K562 (cell line): ENCODE measurements at regions of chr7 and their contacts with region 1.

Region 1: GRCh38 chr7:24778543-24779282 is 21.4 kb upstream of the GSDME start:
- DNase-seq: peak in 1 of 4 experiments; percentile 49
- ATAC-seq: peak; percentile 92
- H3K4me3 ChIP-seq: no peak overlapping the region
- H3K27ac ChIP-seq: peak overlapping the region; percentile 71; the same call in 2 of the 3 replicates
- H3K4me1 ChIP-seq: peaks cover 3 to 16% of the 10 kb centered on the region in 2 experiments; a peak in 3 of 5 replicates
- H3K27me3 ChIP-seq: no peaks in the 10 kb centered on the region
- CTCF ChIP-seq: no peak
- EP300 ChIP-seq: peak; percentile 92
- POLR2A ChIP-seq: no peak
- RAD21 ChIP-seq: peak; percentile 12 to 23; a peak in 1 of 4 replicates

Region 2: GRCh38 chr7:24545215-24545614 is 233.5 kb before region 1 on chr7:
- CTCF ChIA-PET with region 1: no interaction called
- POLR2A ChIA-PET with region 1: no interaction called
- in situ Hi-C with region 1: no loop called
- intact Hi-C with region 1: no loop called
- DNase-seq: no peak
- ATAC-seq: no peak
- H3K4me3 ChIP-seq: no peak overlapping the region
- H3K27ac ChIP-seq: no peak overlapping the region
- H3K4me1 ChIP-seq: no peaks in the 10 kb centered on the region
- H3K27me3 ChIP-seq: peaks cover 7 to 14% of the 10 kb centered on the region in 2 experiments; a peak in 4 of 5 replicates
- CTCF ChIP-seq: no peak
- EP300 ChIP-seq: no peak
- POLR2A ChIP-seq: no peak
- RAD21 ChIP-seq: no peak

Region 3: GRCh38 chr7:24750441-24751055 is 28.2 kb before region 1 on chr7:
- CTCF ChIA-PET with region 1: no interaction called
- POLR2A ChIA-PET with region 1: no interaction called
- in situ Hi-C with region 1: no loop called
- intact Hi-C with region 1: no loop called
- DNase-seq: no peak
- ATAC-seq: no peak
- H3K4me3 ChIP-seq: no peak overlapping the region
- H3K27ac ChIP-seq: no peak overlapping the region
- H3K4me1 ChIP-seq: peaks cover 0 to 2% of the 10 kb centered on the region in 2 experiments; a peak in 1 of 5 replicates
- H3K27me3 ChIP-seq: peaks cover 2 to 15% of the 10 kb centered on the region in 2 experiments; a peak in 4 of 5 replicates
- CTCF ChIP-seq: no peak
- EP300 ChIP-seq: no peak
- POLR2A ChIP-seq: no peak
- RAD21 ChIP-seq: no peak

Region 4: DNA sequence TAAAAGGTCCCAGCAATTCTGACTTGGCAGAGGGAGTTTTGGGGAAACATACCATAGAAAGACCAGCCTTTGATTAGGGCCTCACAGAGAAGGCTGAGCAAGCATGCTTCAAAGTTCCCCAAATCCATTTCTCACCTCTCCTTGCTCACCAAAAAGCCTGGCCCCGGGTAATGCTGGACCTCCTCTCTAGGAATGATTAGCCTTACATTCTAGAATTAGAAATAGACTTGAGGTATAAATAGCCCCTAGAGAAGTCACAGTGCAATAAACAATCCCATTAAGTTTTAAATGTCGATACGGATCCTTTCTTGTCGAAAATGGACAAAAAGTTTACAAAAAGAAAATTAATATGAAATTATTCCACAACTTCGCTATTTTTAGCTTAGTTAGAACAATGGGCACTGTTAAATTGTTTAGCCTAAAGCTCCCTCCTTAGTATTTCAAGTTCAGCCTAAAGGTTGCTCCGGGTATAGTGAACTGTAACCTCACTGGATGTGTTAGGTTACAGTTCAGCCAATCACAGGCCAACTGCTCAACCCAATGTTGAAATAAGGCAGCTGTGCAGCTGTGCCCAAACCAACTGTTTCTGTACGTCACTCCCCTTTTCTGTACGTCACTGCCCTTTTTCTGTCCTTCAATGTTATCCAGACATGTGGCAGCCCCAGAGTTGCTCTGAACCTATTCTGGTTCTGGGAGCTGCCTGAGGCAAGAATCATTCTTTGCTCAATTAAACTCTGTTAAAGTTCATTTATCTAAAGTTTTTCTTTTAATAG is 13.6 kb before region 1 on chr7:
- CTCF ChIA-PET with region 1: no interaction called
- POLR2A ChIA-PET with region 1: interaction called, 20 read pairs
- in situ Hi-C with region 1: no loop called
- intact Hi-C with region 1: loop called (anchors 2 kb)
- DNase-seq: no peak
- ATAC-seq: peak; percentile 62
- H3K4me3 ChIP-seq: no peak overlapping the region
- H3K27ac ChIP-seq: no peak overlapping the region
- H3K4me1 ChIP-seq: peaks cover 3 to 29% of the 10 kb centered on the region in 2 experiments; a peak in 4 of 5 replicates
- H3K27me3 ChIP-seq: no peaks in the 10 kb centered on the region
- CTCF ChIP-seq: no peak
- EP300 ChIP-seq: no peak
- POLR2A ChIP-seq: no peak
- RAD21 ChIP-seq: no peak

Region 5: GRCh38 chr7:25408012-25408687 is 629.4 kb after region 1 on chr7:
- CTCF ChIA-PET with region 1: no interaction called
- POLR2A ChIA-PET with region 1: no interaction called
- in situ Hi-C with region 1: no loop called
- intact Hi-C with region 1: no loop called
- DNase-seq: no peak
- ATAC-seq: no peak
- H3K4me3 ChIP-seq: no peak overlapping the region
- H3K27ac ChIP-seq: no peak overlapping the region
- H3K4me1 ChIP-seq: no peaks in the 10 kb centered on the region
- H3K27me3 ChIP-seq: peaks cover 3 to 14% of the 10 kb centered on the region in 2 experiments; a peak in 3 of 5 replicates
- CTCF ChIP-seq: no peak
- EP300 ChIP-seq: no peak
- POLR2A ChIP-seq: no peak
- RAD21 ChIP-seq: no peak